Activated naive CD4-positive, alpha-beta T cell treated with anti-CD3 and anti-CD28 coated beads, Interleukin-2, amount 10 ng/mL, durations not matched to agents 7 days and 5 days (primary cell): ENCODE measurements at regions of chr19 and their contacts with region 1.

Region 1: DNA sequence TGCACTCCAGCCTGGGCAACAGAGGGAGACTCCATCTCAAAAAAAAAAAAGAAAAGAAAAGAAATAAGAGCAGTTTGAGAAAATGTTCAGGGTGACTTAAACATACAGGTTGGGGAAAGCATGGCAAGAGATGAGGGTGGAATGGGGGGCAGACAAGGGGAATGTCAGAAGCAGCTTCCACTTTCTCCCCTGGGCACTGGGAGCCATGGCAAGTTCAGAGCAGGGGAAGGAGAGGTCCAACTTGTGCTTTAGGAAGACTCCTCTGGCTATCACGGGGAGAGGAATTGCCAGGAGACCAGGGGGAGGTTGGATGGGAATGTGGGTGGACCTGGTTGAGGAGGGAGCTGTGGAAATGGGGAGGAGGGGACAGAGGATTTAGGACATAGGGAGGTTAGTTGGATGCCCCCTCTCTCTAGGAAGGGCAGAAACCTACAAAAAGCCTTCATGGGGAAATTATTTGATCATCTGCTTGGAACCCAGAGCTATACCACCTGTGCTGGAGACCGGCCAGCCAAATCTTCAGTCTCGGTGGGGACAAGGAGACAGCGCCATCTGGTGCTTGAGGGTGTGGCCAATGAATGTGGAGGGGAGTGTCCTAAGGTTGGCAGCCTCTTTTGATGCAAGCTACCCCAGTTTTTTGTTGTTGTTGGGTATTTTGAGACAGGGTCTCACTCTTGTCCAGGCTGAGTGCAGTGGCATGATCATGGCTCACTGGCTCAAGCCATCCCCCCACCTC is 7.3 kb upstream of the STRN4 start:
- DNase-seq: peak; percentile 87
- H3K4me3 Mint-ChIP-seq: no peak overlapping the region
- H3K27ac Mint-ChIP-seq: no peak overlapping the region
- H3K4me1 Mint-ChIP-seq: peaks cover 15% of the 10 kb centered on the region
- H3K27me3 Mint-ChIP-seq: no peaks in the 10 kb centered on the region

Region 2: GRCh38 chr19:46529622-46530462 is 223.7 kb before region 1 on chr19:
- CTCF ChIA-PET with region 1: interaction called, 12 read pairs
- DNase-seq: peak; percentile 83
- H3K4me3 Mint-ChIP-seq: no peak overlapping the region
- H3K27ac Mint-ChIP-seq: peak overlapping the region; percentile 31
- H3K4me1 Mint-ChIP-seq: peaks cover 22% of the 10 kb centered on the region
- H3K27me3 Mint-ChIP-seq: peaks cover 38% of the 10 kb centered on the region

Region 3: GRCh38 chr19:46704379-46705076 is 49.1 kb before region 1 on chr19:
- CTCF ChIA-PET with region 1: interaction called, 16 read pairs
- DNase-seq: peak; percentile 91
- H3K4me3 Mint-ChIP-seq: no peak overlapping the region
- H3K27ac Mint-ChIP-seq: peak overlapping the region; percentile 81
- H3K4me1 Mint-ChIP-seq: peaks cover 16% of the 10 kb centered on the region
- H3K27me3 Mint-ChIP-seq: no peaks in the 10 kb centered on the region

Region 4: DNA sequence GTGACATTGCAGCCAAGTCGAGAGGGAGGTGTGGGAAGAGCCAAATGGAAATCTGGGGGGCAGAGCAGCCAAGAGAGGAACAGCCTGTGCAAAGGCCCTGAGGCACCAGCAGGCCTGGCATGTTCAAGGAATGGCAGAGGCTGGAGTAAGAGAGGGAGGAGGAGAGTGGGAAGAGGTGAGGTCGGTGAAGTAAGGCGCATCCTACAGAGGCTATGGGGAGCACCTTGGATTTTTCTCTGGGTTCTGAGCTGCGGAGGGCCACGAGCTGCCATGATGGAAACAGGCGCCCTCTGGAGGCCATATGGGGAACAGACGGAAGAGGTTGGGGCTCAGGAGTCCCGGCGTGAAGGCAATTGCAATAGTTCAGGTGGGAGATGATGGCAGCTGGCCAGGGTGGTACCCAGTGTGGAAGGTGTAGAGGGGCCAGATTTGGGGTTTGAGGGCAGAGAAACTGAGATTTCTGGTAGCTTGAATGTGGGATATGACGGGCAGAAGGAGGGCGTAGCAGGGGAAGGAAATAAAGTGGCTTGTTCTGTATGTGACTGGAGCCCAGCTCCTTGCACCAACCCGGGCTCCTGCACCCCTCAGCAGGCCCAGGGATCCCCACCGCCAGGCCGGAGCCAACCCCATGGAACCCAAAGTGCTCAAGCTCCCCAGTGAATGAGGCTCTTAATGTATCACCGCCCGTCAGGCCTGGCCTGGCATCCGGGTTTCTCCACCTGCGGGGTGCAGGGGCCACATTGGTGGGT is 13.2 kb after region 1 on chr19:
- CTCF ChIA-PET with region 1: interaction called, 23 read pairs
- DNase-seq: peak; percentile 76
- H3K4me3 Mint-ChIP-seq: no peak overlapping the region
- H3K27ac Mint-ChIP-seq: no peak overlapping the region
- H3K4me1 Mint-ChIP-seq: peaks cover 5% of the 10 kb centered on the region
- H3K27me3 Mint-ChIP-seq: peaks cover 4% of the 10 kb centered on the region

Region 5: DNA sequence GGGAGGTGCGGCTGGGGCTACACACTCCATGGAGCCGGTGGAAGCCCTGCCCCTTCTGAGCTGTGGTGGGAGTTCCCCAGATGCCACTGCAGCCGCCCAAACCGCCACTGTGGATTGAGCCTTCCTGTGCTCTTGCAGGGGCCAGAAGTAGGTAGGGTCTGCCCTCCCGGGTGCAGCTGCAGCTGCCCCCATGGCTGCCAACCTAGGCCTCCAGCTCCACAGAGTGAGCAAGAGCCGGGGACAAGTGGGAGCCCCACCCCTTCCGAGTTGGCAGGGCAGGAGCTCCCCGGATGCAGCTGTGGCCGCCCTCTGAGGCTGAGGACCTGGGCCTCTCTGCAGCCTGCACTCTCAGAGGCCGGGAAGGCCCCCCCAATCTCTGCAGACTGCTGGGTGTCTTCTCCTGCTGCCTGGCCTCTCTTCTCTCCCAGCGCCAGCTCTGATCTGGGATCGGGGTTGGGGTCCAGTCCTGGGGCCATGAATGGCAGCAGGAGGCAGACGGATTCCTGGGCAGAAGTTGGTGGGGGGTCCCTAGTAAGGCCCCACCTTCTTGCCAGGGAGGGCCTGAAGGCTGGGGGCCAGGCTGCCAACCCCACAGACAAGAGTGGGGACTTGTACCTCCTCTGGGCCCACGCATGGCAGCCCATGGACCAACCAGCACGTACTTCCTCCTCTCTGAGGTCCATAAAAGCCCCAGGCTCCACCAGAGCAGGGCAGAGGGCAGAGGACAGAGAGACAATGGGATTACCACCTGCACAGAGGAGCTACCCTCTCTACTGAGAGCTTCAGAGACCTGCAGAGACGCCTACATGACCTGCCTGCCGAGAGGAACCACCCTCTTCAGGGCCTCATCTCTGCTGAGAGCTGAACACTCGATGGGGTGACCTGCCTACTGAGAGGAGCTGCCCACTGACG is 68.2 kb after region 1 on chr19:
- CTCF ChIA-PET with region 1: interaction called, 32 read pairs
- DNase-seq: peak; percentile 78
- H3K4me3 Mint-ChIP-seq: peak overlapping the region; percentile 54
- H3K27ac Mint-ChIP-seq: peak overlapping the region; percentile 90
- H3K4me1 Mint-ChIP-seq: peaks cover 53% of the 10 kb centered on the region
- H3K27me3 Mint-ChIP-seq: peaks cover 10% of the 10 kb centered on the region

Region 6: DNA sequence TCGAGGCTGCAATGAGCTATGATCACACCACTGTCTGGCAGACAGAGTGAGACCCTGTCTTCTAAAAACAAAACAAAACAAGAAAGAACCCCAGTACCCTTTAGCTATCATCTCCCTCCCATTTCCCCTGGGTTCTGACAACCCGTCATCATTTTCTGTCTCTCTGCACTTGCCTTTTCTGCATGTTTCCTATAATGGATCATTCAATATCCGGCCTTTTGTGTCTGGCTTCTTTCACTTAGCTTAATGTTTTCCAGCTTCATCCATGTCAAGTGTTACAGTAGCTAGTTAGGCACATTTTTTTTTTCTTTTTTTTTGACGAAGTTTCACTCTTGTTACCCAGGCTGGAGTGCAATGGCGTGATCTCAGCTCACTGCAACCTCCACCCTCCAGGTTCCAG is 80.5 kb after region 1 on chr19:
- CTCF ChIA-PET with region 1: interaction called, 124 read pairs
- DNase-seq: no peak
- H3K4me3 Mint-ChIP-seq: no peak overlapping the region
- H3K27ac Mint-ChIP-seq: no peak overlapping the region
- H3K4me1 Mint-ChIP-seq: no peaks in the 10 kb centered on the region
- H3K27me3 Mint-ChIP-seq: peaks cover 9% of the 10 kb centered on the region

Region 7: DNA sequence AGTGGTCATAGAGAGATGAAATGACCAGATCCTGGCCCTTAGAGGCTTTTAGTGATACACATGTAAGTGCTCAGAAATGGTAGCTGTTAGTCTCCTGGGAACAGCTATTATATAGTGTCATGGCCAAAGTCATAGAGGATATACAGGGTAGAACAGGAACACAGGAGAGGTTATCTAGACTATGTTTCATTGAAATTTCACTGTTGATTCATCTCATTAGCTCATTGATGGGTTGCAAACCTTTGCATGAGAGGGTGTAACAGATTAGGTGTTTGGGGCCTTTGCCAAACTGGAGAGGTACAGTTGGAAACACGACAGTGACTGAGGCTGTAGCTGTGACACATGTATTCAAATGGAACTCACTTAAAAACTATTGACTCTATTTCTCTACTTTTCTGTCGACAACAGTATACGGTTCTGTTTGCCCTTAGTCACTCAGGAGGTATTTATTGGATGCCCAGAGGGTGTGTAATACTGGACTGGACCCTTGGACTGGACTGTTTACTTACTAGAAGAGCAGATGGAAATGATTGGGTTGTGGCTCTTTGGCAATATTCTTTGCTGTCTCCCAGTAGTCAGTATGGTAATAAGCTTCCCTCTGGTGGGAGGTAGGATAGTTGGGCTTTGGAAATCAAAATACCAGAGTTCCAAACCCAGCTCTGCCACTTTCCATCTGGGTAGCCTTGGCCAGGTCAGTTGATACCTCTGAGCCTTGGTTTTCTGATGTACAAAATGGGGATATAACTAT is 137.0 kb after region 1 on chr19:
- CTCF ChIA-PET with region 1: no interaction called
- DNase-seq: no peak
- H3K4me3 Mint-ChIP-seq: no peak overlapping the region
- H3K27ac Mint-ChIP-seq: no peak overlapping the region
- H3K4me1 Mint-ChIP-seq: peaks cover 2% of the 10 kb centered on the region
- H3K27me3 Mint-ChIP-seq: no peaks in the 10 kb centered on the region